ENCODE measurements at regions of chr12 and their contacts with region 1.

Region 1: DNA sequence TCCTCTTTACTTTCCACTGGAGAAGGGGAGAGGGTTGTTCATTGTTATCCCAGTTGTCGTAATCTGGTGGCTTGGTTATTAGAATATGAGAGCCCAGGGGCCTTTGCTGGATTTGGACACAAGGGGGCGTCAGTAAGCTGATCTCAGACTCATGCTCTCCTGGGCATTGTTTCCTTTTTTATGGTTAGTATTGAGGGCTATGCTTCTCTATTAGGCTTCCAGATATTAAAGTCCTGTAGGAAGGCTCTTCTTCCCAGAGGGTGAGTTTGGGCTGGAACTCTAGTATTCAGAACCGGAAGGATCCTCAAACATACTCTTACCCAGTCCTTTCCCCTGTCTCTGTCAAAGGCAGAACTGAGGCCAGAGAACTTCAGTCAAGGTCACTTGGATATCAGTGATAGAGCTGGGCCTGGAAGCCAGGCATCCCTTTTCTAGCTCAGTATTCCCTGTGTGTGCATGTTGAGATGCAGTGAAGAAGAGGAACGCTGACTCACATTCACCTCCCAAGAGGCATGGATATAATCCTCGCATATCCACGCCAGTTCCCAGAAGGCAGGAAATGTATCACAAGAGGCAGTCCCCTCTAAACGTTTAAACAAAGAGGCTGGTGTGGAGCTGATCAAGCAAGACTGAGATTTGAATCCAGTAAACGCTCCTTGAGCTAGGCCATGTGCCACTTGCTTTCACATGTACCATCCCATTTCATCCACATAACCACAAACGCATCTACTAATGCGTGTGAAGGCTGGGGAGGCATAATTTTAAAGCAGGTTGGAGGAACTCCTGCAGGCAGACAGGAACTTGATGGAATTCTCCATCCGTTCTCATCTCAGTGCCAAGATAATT is 41.6 kb downstream of the UBE3B start:
- DNase-seq: peak; percentile 69
- ATAC-seq: peak; percentile 50 to 60

Region 2: DNA sequence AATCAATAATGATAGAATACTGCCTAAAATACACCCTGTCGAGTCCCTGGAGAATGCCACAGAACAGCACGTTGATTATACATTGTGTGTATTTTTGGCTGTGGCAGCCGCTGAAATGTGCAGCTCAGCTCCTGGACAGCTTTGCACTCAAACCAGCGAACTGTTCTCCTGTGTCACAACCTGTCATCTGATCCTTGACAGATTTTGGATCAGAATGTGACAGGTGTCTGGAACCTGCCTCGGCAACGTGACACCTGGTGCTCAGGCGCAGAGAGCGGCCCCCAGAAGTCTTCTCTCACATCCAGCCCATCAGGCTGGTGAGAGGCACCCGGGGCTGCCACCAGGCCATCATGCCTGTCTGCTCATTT is 73.8 kb after region 1 on chr12:
- intact Hi-C with region 1: loop called in 1 of 2 experiments (anchors 5 kb)
- DNase-seq: no peak
- ATAC-seq: no peak